Lower leg skin (tissue), 4 donors: ENCODE measurements at regions of chr1 and their contacts with region 1.

Region 1: DNA sequence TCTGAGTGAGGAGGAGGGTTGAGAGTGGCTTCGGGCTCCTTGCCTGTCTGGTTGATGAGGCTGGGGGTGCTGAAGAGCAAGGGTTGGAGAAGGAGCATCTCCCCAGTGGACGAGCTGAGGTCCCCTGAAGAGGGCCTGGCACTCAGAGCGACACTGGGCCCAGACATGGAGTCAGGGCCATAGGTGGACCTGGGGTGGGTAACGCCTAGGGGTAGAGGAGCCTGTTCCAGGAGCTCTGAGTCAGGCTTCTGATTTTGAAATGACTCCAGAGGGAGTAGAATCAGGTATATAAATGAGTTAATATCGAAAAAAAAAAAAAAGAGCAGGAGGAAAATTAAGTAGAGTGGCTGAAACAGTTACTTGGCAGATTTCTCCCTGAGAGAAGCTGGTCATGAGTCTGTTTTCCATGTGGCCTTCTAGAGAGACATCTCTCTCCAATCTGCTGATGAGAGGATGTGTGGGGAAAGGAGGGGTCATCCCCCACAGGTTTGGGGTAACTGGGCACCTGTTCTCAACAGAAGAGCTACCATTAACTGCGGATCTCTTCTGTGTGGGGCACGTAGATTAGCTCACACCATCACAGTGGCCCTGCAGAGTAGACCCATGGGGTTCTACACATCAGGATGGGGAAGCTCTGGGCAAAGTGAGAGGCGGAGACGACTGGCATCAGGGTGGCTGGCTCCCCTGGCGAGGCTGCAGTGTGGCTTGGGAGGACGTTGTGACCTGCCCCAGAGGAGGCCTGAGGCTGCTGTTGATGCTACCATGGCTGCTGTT is 115.5 kb downstream of the DHRS3 start:
- DNase-seq: no peak
- H3K4me3 ChIP-seq: no peak overlapping the region
- CTCF ChIP-seq: no peak
- POLR2A ChIP-seq: no peak

Region 2: GRCh38 chr1:12537906-12538461 is 35.5 kb after region 1 on chr1:
- intact Hi-C with region 1: loop called (anchors 1 kb)
- DNase-seq: no peak
- H3K4me3 ChIP-seq: no peak overlapping the region
- CTCF ChIP-seq: no peak
- POLR2A ChIP-seq: no peak